Tibial artery (tissue), 4 donors: ENCODE measurements at regions of chr6 and their contacts with region 1.

Region 1: DNA sequence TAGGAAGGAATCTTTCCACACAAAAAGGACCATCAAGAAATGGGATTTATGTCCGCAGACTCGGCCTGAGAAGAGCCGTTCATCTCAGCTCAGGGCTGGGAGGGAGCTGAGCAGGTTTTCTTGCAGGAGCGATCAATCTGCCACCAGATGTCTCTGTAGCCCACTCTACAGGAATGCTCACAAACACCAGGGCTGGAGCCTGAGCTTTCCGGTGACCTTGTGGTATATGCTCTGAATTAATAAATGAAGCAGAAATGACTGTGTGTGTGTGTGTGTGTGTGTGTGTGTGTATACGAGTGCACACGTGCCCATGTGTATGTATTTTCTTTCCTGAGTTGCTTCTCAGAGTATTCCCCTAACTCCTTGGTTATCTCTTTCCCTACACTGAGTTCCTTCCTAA is 12.0 kb downstream of the CD83 start:
- DNase-seq: peak in 1 of 2 donors; percentile 26
- H3K4me3 ChIP-seq: no peak overlapping the region
- H3K27ac ChIP-seq: no peak overlapping the region
- H3K4me1 ChIP-seq: peaks cover 0 to 10% (median 3%) of the 10 kb centered on the region in 4 donors
- H3K27me3 ChIP-seq: no peaks in the 10 kb centered on the region
- CTCF ChIP-seq: peak; percentile 39 to 43

Region 2: GRCh38 chr6:15630202-15630601 is 1500.6 kb after region 1 on chr6:
- intact Hi-C with region 1: loop called (anchors 10 kb)
- DNase-seq: no peak
- H3K4me3 ChIP-seq: no peak overlapping the region
- H3K27ac ChIP-seq: no peak overlapping the region
- H3K4me1 ChIP-seq: peaks cover 0 to 10% (median 0%) of the 10 kb centered on the region in 4 donors
- H3K27me3 ChIP-seq: no peaks in the 10 kb centered on the region
- CTCF ChIP-seq: no peak